Panc1 (cell line): ENCODE measurements at regions of chr18 and their contacts with region 1.

Region 1: DNA sequence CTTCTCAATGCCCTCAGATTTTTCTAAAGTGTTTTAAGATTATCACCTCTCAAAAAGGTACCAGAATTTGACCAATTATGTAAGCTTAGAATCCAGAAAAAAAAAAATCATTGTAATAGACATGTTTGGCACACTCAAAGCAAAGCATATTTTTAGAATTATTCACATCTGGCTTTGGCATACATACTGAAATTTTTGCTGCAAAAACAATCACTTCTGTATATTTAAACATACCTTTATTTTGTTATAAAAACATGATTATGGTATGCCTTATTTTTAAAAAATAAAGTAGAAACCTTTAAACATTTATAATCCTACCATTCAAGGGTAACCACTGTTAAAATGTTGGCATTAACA is 143.3 kb downstream of the ESCO1 start:
- DNase-seq: no peak
- ATAC-seq: no peak
- H3K4me3 ChIP-seq: no peak overlapping the region
- H3K27ac ChIP-seq: no peak overlapping the region
- H3K4me1 ChIP-seq: no peaks in the 10 kb centered on the region
- H3K27me3 ChIP-seq: no peaks in the 10 kb centered on the region
- CTCF ChIP-seq: no peak

Region 2: GRCh38 chr18:21509062-21509461 is 51.9 kb after region 1 on chr18:
- CTCF ChIA-PET with region 1: interaction called, 11 read pairs
- POLR2A ChIA-PET with region 1: no interaction called
- in situ Hi-C with region 1: no loop called
- intact Hi-C with region 1: no loop called
- DNase-seq: no peak
- ATAC-seq: no peak
- H3K4me3 ChIP-seq: no peak overlapping the region
- H3K27ac ChIP-seq: no peak overlapping the region
- H3K4me1 ChIP-seq: no peaks in the 10 kb centered on the region
- H3K27me3 ChIP-seq: no peaks in the 10 kb centered on the region
- CTCF ChIP-seq: no peak; the same call in 1 of the 2 replicates